ENCODE measurements at regions of chr11 and their contacts with region 1.

Region 1: GRCh38 chr11:3781423-3781822 is 15.9 kb downstream of the NUP98 start:
- H3K4me3 Mint-ChIP-seq: no peak overlapping the region
- H3K27ac Mint-ChIP-seq: no peak overlapping the region
- H3K4me1 Mint-ChIP-seq: peaks cover 28% of the 10 kb centered on the region
- H3K27me3 Mint-ChIP-seq: no peaks in the 10 kb centered on the region

Region 2: DNA sequence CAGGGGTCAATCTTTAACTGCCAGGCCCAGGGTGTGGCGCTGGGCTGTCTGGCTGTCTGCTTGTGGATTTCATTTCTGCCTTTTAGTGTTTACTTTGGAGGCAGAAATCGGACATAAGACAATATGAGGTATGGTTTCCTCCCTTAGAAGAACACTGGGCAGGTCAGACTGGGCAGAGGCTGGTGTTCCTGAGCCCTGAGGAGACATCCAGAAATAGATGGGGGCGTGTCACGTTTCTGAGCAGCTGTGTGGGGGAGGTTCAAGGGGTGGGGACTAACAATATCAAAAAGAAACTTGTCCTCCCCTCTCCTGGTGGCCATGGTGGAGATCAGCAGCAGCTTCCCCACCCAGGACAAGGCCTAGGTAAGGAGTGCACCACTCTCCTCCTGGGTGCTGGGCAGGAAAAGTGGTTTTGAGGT is 136.6 kb before region 1 on chr11 and contains the start of gene ART1:
- intact Hi-C with region 1: no loop called
- H3K4me3 Mint-ChIP-seq: no peak within 1 kb of the TSS
- H3K27ac Mint-ChIP-seq: no peak within 1 kb of the TSS
- H3K4me1 Mint-ChIP-seq: peaks cover 13% of the 10 kb centered on the region
- H3K27me3 Mint-ChIP-seq: peaks cover 60% of the 10 kb centered on the region

Region 3: DNA sequence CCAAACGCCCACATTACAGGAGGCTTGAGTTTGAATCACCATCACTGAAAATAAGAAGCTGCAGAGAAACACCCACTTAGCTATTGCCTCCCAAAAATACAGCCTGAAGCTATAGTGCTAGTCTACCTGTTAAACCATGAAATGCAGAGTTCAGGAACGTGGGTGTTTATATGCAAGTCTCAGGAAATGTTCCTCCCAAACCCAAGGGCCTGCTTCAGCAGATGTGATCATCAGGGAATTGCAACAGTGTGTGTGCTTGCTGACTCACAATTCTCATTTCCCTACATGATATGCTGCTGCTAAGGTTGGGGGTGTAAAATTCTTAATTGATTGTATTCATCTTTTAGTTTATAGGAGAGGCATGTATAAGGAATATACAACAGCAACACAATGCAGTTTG is 33.7 kb before region 1 on chr11:
- intact Hi-C with region 1: loop called (anchors 5 kb)
- H3K4me3 Mint-ChIP-seq: no peak overlapping the region
- H3K27ac Mint-ChIP-seq: peak overlapping the region; percentile 73
- H3K4me1 Mint-ChIP-seq: peaks cover 9% of the 10 kb centered on the region
- H3K27me3 Mint-ChIP-seq: no peaks in the 10 kb centered on the region

Region 4: GRCh38 chr11:3831378-3832239 is 50.2 kb after region 1 on chr11:
- intact Hi-C with region 1: no loop called
- H3K4me3 Mint-ChIP-seq: peak overlapping the region; percentile 28
- H3K27ac Mint-ChIP-seq: peak overlapping the region; percentile 100
- H3K4me1 Mint-ChIP-seq: peaks cover 95% of the 10 kb centered on the region
- H3K27me3 Mint-ChIP-seq: no peaks in the 10 kb centered on the region

Region 5: DNA sequence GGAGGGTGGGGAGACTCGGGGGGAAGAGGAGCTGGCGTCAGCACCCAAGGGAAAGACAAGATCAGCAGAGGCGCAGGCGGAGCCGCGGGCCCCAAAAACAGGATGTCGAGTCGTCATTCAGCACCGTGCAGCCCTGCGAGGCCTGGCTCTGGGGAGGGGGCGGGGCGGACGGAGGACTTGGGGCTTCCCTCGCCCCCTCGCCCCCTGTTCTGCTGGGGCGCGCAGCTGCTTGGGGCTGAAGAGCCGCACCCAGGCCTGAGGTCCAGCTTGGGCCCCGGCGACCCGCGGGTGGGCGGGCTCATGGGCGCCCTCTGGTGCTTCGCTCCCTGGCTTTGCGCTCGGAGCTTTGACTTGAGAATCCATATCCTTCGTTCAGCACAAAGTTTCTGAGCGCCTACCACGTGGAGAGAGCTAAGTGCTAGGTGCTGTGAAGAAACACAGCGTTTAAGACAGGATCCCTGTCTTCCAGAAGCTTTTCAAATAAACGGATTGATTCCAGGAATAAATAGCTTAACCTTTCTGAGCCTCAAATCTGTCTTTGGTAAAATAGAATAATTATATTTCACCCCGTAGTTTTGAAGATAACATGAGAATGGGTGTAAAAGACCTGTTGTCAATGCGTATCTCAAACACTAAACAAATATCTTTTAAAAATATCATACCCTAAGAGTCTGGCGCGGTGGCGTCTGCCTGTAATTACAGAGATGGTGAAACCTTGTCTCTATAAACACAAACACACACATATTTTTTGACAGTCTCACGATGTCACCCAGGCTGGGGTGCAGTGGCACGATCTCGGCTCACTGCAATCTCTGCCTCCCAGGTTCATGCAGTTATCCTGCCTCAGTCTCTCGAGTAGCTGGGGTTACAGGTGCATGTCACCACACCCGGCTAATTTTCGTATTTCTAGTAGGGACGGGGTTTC is 60.3 kb after region 1 on chr11:
- intact Hi-C with region 1: no loop called
- H3K4me3 Mint-ChIP-seq: peak overlapping the region; percentile 91
- H3K27ac Mint-ChIP-seq: peak overlapping the region; percentile 100
- H3K4me1 Mint-ChIP-seq: peaks cover 48% of the 10 kb centered on the region
- H3K27me3 Mint-ChIP-seq: no peaks in the 10 kb centered on the region

Measured in dendritic cell treated with granulocyte-macrophage colony-stimulating factor and Interleukin-4, amounts not matched to agents 40 ng/mL and 50 ng/mL, for 4 days (primary cell).